Activated CD4-positive, alpha-beta T cell treated with anti-CD3 and anti-CD28 coated beads for 36 hours (primary cell): ENCODE measurements at regions of chr19 and their contacts with region 1.

Region 1: DNA sequence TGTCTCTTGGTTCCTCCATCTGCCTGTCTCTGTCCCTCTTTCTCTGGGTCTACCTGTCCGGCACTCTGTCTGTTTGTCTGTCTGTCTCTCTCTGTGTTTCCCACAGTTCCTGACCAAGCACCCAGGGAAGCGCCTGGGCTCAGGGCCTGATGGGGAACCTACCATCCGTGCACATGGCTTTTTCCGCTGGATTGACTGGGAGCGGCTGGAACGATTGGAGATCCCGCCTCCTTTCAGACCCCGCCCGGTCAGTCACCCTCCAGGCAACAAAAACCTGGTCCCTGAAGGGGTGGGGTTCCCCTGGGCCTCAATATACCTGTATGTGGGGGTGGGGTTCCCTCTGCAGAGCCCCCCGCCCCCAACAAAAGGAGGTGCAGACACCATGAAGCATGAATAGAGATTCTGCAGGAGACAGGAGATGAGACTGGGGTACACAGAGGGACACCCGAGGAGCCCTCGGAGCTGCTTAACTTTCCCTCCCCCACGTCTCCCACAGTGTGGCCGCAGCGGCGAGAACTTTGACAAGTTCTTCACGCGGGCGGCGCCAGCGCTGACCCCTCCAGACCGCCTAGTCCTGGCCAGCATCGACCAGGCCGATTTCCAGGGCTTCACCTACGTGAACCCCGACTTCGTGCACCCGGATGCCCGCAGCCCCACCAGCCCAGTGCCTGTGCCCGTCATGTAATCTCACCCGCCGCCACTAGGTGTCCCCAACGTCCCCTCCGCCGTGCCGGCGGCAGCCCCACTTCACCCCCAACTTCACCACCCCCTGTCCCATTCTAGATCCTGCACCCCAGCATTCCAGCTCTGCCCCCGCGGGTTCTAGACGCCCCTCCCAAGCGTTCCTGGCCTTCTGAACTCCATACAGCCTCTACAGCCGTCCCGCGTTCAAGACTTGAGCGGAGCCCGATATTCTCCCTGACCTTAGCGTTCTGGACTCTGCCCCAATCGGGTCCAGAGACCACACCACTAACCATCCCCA is 2.6 kb upstream of the CACNG7 start:
- DNase-seq: peak; percentile 82
- ATAC-seq: peak; percentile 52
- H3K4me3 Mint-ChIP-seq: no peak overlapping the region
- H3K27ac Mint-ChIP-seq: no peak overlapping the region
- H3K4me1 Mint-ChIP-seq: peaks cover 19% of the 10 kb centered on the region
- H3K27me3 Mint-ChIP-seq: peaks cover 69% of the 10 kb centered on the region

Region 2: DNA sequence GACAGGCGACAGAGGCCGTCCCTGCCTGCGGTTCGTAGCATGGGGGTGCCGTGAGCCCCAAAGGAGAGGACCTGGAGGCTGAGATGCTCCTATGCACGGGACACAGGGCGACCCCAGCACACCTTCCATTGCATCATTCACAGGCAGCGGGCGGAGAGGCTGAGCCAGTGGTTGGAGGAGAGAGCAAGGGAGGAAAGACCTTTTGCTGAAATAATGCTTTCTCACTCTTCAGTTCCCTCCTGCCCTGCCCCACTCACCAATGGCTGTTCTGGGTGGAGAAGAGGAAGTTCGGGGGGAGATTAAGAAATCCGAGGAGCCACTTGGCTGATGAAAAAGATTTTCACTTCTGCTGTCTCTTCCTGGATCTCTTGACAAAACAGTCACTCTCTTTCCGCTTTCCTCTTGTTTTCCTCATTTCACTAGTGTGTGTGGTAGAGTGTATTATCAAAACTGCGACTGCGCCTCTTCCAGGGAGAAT is 82.3 kb before region 1 on chr19 and contains the start of gene NLRP12:
- CTCF ChIA-PET with region 1: no interaction called
- POLR2A ChIA-PET with region 1: no interaction called
- intact Hi-C with region 1: no loop called
- DNase-seq: peak; percentile 9
- ATAC-seq: no peak
- H3K4me3 Mint-ChIP-seq: no peak within 1 kb of the TSS
- H3K27ac Mint-ChIP-seq: no peak within 1 kb of the TSS
- H3K4me1 Mint-ChIP-seq: no peaks in the 10 kb centered on the region
- H3K27me3 Mint-ChIP-seq: peaks cover 24% of the 10 kb centered on the region
- total RNA-seq, gene NLRP12: not detected

Region 3: GRCh38 chr19:53844849-53845246 is 61.7 kb before region 1 on chr19:
- CTCF ChIA-PET with region 1: no interaction called
- POLR2A ChIA-PET with region 1: no interaction called
- intact Hi-C with region 1: loop called in 1 of 2 experiments (anchors 2 kb)
- DNase-seq: no peak
- ATAC-seq: no peak
- H3K4me3 Mint-ChIP-seq: no peak overlapping the region
- H3K27ac Mint-ChIP-seq: no peak overlapping the region
- H3K4me1 Mint-ChIP-seq: peaks cover 5% of the 10 kb centered on the region
- H3K27me3 Mint-ChIP-seq: peaks cover 17% of the 10 kb centered on the region

Region 4: DNA sequence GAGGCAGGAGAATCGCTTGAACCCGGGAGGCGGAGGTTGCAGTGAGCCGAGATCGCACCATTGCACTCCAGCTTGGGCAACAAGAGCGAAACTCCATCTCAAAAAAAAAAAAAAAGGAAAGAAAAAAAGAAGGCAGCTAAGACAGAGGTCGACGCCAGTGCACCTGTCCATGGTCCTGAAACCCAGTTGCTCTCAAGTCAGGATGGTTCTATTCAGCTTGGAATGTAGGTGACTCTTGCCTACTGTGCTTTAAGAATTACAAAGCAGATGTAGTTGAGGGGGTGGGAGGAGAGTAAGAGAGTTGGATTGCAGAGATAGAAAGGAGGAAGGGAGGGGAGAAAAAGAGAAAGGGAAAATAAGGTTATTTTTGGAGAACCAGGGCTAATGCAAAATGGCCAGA is 21.2 kb after region 1 on chr19:
- CTCF ChIA-PET with region 1: no interaction called
- POLR2A ChIA-PET with region 1: no interaction called
- intact Hi-C with region 1: loop called (anchors 1 to 2 kb)
- DNase-seq: peak; percentile 66
- ATAC-seq: no peak
- H3K4me3 Mint-ChIP-seq: no peak overlapping the region
- H3K27ac Mint-ChIP-seq: no peak overlapping the region
- H3K4me1 Mint-ChIP-seq: no peaks in the 10 kb centered on the region
- H3K27me3 Mint-ChIP-seq: peaks cover 6% of the 10 kb centered on the region

Region 5: DNA sequence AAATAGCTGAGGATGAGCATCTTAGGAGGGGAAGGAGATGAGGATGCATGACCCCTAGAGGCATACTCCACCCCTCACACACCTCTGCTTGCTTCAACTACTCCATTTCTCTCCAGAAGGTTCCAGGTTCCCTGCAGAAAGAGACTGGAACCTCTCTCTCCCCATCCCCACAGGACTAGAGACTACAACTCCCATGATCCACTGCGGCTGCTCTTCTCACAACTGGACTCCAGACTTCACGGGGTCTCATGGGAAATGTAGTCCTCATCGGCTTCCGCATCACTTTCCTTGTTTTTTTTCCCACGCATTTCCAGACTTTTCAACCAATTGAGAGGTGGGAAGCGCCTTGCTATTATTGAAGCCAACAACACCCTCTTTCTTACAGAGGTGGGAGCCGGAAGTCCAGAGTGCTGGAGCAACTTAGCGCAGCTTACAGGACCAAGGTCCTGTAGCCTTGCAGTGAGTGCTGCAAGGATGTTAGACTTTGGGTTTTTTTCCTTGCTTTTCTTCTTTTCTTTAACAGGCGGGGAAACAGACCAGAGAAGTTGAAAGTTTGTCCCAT is 71.0 kb after region 1 on chr19:
- CTCF ChIA-PET with region 1: no interaction called
- POLR2A ChIA-PET with region 1: no interaction called
- intact Hi-C with region 1: loop called in 1 of 2 experiments (anchors 1 kb)
- DNase-seq: peak; percentile 79
- ATAC-seq: peak; percentile 61
- H3K4me3 Mint-ChIP-seq: peak overlapping the region; percentile 59
- H3K27ac Mint-ChIP-seq: no peak overlapping the region
- H3K4me1 Mint-ChIP-seq: peaks cover 30% of the 10 kb centered on the region
- H3K27me3 Mint-ChIP-seq: peaks cover 53% of the 10 kb centered on the region

Region 6: GRCh38 chr19:54023191-54023590 is 116.7 kb after region 1 on chr19:
- CTCF ChIA-PET with region 1: no interaction called
- POLR2A ChIA-PET with region 1: no interaction called
- intact Hi-C with region 1: loop called (anchors 1 to 2 kb)
- DNase-seq: no peak
- ATAC-seq: no peak
- H3K4me3 Mint-ChIP-seq: no peak overlapping the region
- H3K27ac Mint-ChIP-seq: no peak overlapping the region
- H3K4me1 Mint-ChIP-seq: peaks cover 4% of the 10 kb centered on the region
- H3K27me3 Mint-ChIP-seq: peaks cover 29% of the 10 kb centered on the region

Region 7: DNA sequence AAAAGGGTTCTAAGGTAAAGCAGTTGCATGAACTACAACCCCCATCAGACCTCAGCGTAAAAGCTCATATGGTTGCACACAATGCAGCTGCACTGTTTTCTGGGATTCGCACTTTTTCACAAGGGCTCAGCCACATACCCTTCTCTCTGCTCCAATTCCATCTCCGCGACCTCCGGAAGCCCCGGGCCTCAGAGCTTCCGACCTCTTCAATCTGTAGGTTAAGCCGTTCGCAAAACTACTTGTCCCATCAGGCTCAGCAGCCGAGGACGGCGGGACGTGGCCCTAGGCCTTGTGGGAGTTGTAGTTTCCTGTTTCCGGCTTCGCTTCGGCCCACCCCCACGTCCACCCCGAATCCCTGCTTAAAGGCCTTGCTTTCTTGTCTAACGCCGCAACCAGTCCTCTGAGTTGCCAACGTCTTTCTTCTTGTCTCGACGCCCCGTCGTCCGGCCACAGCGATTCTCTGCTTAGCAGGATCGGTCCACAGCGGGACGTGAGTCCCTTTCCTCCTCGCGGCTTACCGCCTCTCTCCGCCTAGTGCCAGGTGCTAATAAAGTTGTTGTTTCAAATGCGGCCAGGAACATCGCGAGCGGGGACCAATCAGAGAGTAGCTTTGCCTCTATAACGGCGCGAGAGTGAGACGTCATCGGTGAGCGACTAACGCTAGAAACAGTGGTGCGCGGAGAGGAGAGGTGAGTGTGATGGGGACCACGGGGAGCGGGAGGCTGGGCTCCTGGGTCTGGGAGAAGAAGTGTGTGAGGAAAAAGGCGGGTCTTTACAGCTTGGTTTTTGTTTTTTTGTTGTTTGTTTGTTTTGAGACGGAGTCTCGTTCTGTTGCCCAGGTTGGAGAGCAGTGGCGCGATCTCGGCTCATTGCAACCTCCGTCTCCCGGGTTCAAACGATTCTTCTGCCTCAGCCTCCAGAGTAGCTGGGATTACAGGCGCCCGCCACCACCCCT is 208.9 kb after region 1 on chr19 and contains the starts of genes PRPF31 and TFPT:
- CTCF ChIA-PET with region 1: no interaction called
- POLR2A ChIA-PET with region 1: no interaction called
- intact Hi-C with region 1: loop called in 1 of 2 experiments (anchors 1 kb)
- DNase-seq: peak; percentile 97
- ATAC-seq: peak; percentile 94
- H3K4me3 Mint-ChIP-seq: peak within 1 kb of the TSS; percentile 83
- H3K27ac Mint-ChIP-seq: peak within 1 kb of the TSS; percentile 96
- H3K4me1 Mint-ChIP-seq: peaks cover 25% of the 10 kb centered on the region
- H3K27me3 Mint-ChIP-seq: no peaks in the 10 kb centered on the region
- total RNA-seq, gene PRPF31: 85.5 to 115 TPM
- total RNA-seq, gene TFPT: 28.5 to 39.3 TPM